Caco-2 (cell line): ENCODE measurements at regions of chr1 and their contacts with region 1.

Region 1: DNA sequence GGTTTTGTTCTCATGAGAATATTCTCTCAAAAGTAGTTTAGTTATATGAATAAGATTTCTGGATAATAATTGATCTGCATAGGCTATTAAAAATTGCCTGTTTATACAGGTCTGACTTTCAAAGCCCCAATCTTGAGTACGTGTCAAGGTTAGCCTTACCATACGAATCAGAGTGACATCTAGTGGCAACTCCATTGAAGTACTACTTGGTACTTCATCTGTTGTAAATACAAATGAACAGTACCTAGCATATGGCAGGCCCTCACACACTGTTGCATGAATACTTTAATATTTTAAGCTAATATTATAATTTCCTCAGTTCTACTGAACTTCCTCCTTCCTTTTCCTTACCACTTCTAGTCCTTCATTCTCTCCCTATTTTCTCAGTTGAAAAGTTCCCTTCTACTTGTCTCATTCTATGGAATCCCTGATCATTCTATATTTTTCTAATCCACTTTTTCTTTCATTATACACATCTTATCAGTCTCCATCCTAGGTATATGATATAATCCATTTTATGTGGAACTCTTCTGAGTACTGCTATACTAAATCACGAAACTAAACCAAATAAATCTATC is 101.2 kb downstream of the AKT3 start:
- DNase-seq: peak in 1 of 2 experiments; percentile 42
- H3K4me3 ChIP-seq: no peak overlapping the region
- H3K4me3 Mint-ChIP-seq: no peak overlapping the region
- H3K27ac Mint-ChIP-seq: no peak overlapping the region
- H3K4me1 ChIP-seq: no peaks in the 10 kb centered on the region
- H3K4me1 Mint-ChIP-seq: no peaks in the 10 kb centered on the region
- H3K27me3 ChIP-seq: peaks cover 2% of the 10 kb centered on the region; the same call in 1 of the 2 replicates
- H3K27me3 Mint-ChIP-seq: peaks cover 3% of the 10 kb centered on the region
- CTCF ChIP-seq: peak; percentile 68 to 78

Region 2: GRCh38 chr1:243343970-243344937 is 404.5 kb before region 1 on chr1:
- CTCF ChIA-PET with region 1: interaction called, 3 read pairs
- POLR2A ChIA-PET with region 1: no interaction called
- intact Hi-C with region 1: loop called (anchors 1 kb)
- DNase-seq: peak in 1 of 2 experiments; percentile 45
- H3K4me3 ChIP-seq: no peak overlapping the region
- H3K4me3 Mint-ChIP-seq: no peak overlapping the region
- H3K27ac Mint-ChIP-seq: no peak overlapping the region
- H3K4me1 ChIP-seq: no peaks in the 10 kb centered on the region
- H3K4me1 Mint-ChIP-seq: peaks cover 12% of the 10 kb centered on the region
- H3K27me3 ChIP-seq: no peaks in the 10 kb centered on the region
- H3K27me3 Mint-ChIP-seq: no peaks in the 10 kb centered on the region
- CTCF ChIP-seq: peak; percentile 68 to 71

Region 3: DNA sequence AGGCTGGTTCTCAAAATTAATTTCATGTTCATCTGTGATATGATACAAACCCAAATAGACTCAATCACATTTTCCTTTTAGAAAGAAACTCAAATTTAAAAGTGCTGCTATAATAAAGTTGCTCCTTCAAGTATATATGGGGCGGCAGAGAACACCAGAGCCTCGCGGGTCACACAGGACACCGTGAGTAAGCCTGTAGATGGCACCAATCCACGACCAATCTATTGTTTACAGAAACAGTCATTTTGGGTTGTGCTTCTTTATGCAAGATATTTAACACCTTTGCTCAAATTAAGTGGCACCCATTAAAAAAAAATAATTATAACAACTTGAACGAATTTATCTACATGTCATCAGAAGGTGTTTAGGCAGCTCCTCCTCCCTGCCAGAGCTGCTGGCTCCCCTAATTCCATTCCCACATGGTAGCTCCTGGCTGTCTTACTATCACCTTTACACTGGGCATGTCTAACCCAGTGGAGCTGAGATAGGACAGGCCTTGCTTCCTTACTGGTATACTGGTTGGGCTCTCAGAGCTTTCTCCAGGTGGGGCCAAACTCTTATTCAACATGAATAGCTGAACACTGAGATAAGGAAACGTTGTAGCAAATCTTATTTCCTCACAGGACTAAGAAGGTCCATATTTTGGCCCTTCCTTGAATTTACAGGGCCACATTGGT is 205.9 kb before region 1 on chr1:
- CTCF ChIA-PET with region 1: no interaction called
- POLR2A ChIA-PET with region 1: no interaction called
- intact Hi-C with region 1: loop called (anchors 5 kb)
- DNase-seq: no peak
- H3K4me3 ChIP-seq: no peak overlapping the region
- H3K4me3 Mint-ChIP-seq: no peak overlapping the region
- H3K27ac Mint-ChIP-seq: no peak overlapping the region
- H3K4me1 ChIP-seq: no peaks in the 10 kb centered on the region
- H3K4me1 Mint-ChIP-seq: no peaks in the 10 kb centered on the region
- H3K27me3 ChIP-seq: no peaks in the 10 kb centered on the region
- H3K27me3 Mint-ChIP-seq: peaks cover 2% of the 10 kb centered on the region
- CTCF ChIP-seq: no peak

Region 4: GRCh38 chr1:243708210-243708609 is 40.6 kb before region 1 on chr1:
- CTCF ChIA-PET with region 1: no interaction called
- POLR2A ChIA-PET with region 1: no interaction called
- intact Hi-C with region 1: loop called (anchors 1 kb)
- DNase-seq: no peak
- H3K4me3 ChIP-seq: no peak overlapping the region
- H3K4me3 Mint-ChIP-seq: no peak overlapping the region
- H3K27ac Mint-ChIP-seq: no peak overlapping the region
- H3K4me1 ChIP-seq: no peaks in the 10 kb centered on the region
- H3K4me1 Mint-ChIP-seq: no peaks in the 10 kb centered on the region
- H3K27me3 ChIP-seq: no peaks in the 10 kb centered on the region
- H3K27me3 Mint-ChIP-seq: peaks cover 3% of the 10 kb centered on the region
- CTCF ChIP-seq: peak in 1 of 2 experiments; percentile 37